ENCODE measurements at regions of chr19 and their contacts with region 1.

Region 1: DNA sequence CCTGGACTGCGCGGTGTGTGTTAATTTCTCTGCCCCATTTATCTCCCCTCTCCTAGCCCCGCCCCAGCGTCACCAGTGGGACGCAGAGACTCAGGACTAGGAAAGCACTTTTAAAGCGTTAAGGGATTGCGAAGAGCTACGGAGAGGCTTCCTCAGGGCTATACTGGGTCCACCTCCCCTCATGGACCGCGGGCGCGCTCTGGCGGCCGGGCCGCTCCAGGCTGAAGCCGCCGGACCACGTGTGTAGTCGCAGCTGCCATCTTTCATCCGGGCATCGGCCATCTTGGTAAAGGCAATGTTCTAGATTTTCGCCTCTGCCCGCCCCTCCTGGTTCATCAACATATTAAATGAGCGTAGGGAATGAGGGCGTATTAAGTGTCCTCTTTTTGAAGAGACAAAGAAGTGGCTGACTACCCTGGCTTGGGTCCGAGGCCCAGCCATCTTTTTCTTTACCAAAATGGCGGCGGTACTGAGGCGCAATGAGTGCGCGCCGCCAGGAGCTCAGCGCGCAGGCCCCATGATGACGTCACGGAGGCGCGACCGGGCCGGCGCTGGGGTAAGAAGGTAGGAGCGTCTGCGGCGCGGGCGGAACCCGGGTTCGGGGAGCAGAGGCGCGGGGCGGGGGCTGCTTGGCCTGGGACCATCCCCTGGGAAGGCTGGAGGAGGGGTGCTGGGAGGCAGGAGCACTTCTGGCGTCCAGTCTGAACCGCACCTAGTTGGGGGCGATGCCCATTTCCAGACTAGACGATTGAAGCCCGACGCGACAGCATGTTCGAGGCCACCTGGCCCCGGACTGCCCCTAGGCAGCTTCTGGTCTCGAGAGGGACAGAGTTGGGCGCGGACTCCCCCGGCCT is at the start of gene CCDC124:
- DNase-seq: peak; percentile 84 to 92
- ATAC-seq: peak; percentile 97 to 98
- H3K4me3 ChIP-seq: peak within 1 kb of the TSS; percentile 90
- H3K27ac ChIP-seq: peak within 1 kb of the TSS; percentile 89 to 91
- H3K4me1 ChIP-seq: peaks cover 9% of the 10 kb centered on the region
- CTCF ChIP-seq: peak; percentile 89
- EP300 ChIP-seq: no peak
- POLR2A ChIP-seq: peak; percentile 63
- RAD21 ChIP-seq: peak; percentile 95 to 98
- polyA plus RNA-seq, gene CCDC124: 20.8 and 35.4 TPM in 2 replicates

Region 2: DNA sequence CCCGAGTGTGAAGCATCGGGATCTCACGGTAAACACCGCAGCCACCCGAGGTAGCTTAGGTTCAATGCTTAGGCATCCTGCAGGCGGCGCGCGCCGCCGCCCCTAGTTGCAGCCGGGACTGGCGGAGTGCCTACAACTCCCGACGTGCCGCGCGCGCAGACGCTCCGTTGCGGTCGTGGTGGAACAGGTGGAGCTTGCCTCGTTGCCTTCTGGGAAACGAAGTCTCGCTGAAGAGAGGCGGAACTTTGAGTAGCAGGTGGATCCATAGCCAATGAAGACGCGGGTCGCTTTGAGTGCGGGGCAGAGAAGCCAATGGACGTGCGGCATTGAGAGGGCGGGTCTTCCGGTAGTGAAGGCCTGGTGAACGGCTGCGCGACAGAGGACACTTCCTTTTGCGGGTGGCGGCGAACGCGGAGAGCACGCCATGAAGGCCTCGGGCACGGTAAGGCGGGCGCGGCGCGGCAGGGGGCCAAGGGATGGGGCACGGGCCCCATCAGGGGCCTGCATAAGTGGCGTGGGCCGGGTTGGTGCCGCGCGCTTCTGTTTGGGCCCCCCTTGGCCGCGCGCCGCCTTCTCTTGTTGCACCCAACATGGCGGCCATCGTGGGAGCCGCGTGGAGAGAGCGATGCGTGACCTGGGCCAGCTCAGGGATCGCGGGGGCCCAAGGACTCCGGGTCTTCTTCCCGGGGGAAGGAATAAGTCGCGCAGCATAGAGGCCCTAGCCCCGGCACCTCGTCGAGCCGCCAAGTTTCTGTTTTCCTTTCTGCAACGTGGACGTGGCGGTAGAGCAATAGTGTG is 73.0 kb before region 1 on chr19 and contains the start of gene RPL18A:
- CTCF ChIA-PET with region 1: interaction called, 295 read pairs
- POLR2A ChIA-PET with region 1: interaction called, 48 read pairs
- DNase-seq: peak; percentile 91 to 99
- ATAC-seq: peak; percentile 89 to 93
- H3K4me3 ChIP-seq: peak within 1 kb of the TSS; percentile 99
- H3K27ac ChIP-seq: peak within 1 kb of the TSS; percentile 99 to 100
- H3K4me1 ChIP-seq: peaks cover 33% of the 10 kb centered on the region
- CTCF ChIP-seq: peak; percentile 71
- EP300 ChIP-seq: no peak
- POLR2A ChIP-seq: peak; percentile 68
- RAD21 ChIP-seq: peak; percentile 44 to 57
- polyA plus RNA-seq, gene RPL18A: 624 and 696 TPM in 2 replicates

Region 3: DNA sequence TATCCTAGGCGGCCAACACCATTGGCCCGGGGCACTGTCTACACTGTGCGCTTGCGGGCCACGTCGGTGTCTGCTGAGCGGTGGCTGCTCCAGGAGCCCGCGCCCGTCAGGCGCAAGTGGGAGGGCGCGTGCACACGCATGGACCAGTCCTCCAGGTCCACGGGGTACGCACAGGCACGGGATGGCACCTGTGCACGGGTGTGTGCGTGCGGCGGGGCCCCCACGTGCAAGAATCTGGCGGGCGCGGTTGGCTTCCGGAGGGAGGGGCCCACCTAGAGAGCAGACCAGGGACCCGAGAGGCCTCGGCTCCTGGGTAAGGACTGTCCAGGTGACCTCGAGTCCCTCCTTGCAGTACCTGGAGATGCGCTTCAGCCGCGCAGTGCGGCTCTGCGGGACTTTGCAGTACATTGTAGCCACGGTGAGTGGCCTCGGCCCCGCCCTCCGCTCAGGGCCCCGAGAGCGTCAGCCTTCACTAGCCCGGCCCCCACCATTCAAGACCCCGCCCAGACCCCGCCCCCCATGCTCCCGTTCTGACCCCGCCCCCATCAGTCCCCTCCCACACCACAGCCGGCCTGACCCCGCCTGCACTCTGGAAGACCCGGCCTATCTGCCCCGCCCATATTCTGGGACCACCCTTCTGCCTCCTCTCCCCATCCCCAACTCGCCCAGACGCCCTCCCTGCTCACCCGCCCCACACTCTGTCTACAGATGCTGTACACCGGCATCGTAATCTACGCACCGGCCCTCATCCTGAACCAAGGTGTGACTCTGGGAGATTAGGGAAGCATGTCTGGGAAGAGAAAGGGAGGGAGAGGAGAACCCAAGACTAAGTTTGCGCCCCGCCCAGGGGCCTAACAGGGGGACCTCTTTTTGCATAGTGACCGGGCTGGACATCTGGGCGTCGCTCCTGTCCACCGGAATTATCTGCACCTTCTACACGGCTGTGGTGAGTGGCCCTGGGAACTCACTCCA is 58.6 kb before region 1 on chr19:
- CTCF ChIA-PET with region 1: interaction called, 295 read pairs
- POLR2A ChIA-PET with region 1: interaction called, 22 read pairs
- DNase-seq: peak; percentile 49 to 69
- ATAC-seq: peak; percentile 74 to 81
- H3K4me3 ChIP-seq: peak overlapping the region; percentile 52
- H3K27ac ChIP-seq: peak overlapping the region; percentile 65 to 80
- H3K4me1 ChIP-seq: no peaks in the 10 kb centered on the region
- CTCF ChIP-seq: no peak
- EP300 ChIP-seq: no peak
- POLR2A ChIP-seq: 0 out of 2 replicates have a peak, but pooled peaks have one; percentile 19
- RAD21 ChIP-seq: no peak

Region 4: GRCh38 chr19:17909003-17909732 is 23.5 kb before region 1 on chr19:
- CTCF ChIA-PET with region 1: interaction called, 15 read pairs
- POLR2A ChIA-PET with region 1: no interaction called
- DNase-seq: no peak
- ATAC-seq: no peak
- H3K4me3 ChIP-seq: no peak overlapping the region
- H3K27ac ChIP-seq: no peak overlapping the region
- H3K4me1 ChIP-seq: no peaks in the 10 kb centered on the region
- CTCF ChIP-seq: no peak
- EP300 ChIP-seq: no peak
- POLR2A ChIP-seq: no peak
- RAD21 ChIP-seq: no peak

Region 5: DNA sequence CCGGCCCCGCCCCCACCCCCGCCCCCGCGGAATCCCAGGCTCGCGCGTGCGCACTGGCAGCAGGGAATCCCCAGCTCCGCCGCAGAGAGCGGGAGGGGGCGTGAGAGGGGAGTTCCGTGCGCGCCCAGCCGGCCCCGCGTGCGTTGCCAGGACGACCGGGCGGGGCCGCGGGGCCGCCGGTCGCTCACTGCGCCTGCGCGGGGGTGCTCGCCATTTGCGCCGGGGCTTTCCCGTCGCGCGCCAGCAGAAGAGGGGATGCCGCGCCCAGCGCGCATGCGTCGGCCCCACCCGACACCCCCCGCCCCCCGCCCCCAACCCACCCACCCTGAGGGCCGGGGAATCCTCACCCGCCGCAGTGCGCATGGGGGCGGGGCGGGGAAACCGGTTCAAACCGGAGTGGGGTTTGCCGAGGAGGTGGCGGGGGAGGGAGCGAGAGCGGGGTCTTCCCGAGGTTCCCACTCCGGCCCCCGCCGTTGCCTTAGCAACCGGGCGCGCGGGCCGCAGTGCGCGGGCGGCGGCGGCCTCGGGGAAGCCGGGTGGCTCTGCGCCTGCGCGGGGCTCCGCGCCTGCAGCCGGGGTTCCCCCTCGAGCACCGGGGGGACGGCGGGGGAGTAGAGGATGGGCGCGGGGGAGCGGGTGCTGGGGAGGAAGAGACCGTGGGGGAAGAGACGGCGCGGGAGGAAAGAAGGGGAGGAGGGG is 15.3 kb after region 1 on chr19:
- CTCF ChIA-PET with region 1: interaction called, 69 read pairs
- POLR2A ChIA-PET with region 1: interaction called, 3 read pairs
- DNase-seq: peak; percentile 85 to 90
- ATAC-seq: peak; percentile 51 to 62
- H3K4me3 ChIP-seq: peak overlapping the region; percentile 52
- H3K27ac ChIP-seq: peak overlapping the region; percentile 82 to 98
- H3K4me1 ChIP-seq: peaks cover 42% of the 10 kb centered on the region
- CTCF ChIP-seq: no peak
- EP300 ChIP-seq: no peak
- POLR2A ChIP-seq: no peak
- RAD21 ChIP-seq: no peak

Measured in A549 (cell line).